GM12878 (cell line): ENCODE measurements at regions of chr7 and their contacts with region 1.

Region 1: GRCh38 chr7:43700059-43700501 is 29.2 kb downstream of the COA1 start:
- DNase-seq: no peak
- ATAC-seq: peak; percentile 66
- H3K4me3 ChIP-seq: no peak overlapping the region
- H3K27ac ChIP-seq: no peak overlapping the region
- H3K4me1 ChIP-seq: peaks cover 43% of the 10 kb centered on the region
- H3K27me3 ChIP-seq: no peaks in the 10 kb centered on the region
- CTCF ChIP-seq: peak; percentile 40 to 77 (median 50); a peak in 5 of 6 replicates
- EP300 ChIP-seq: no peak
- POLR2A ChIP-seq: no peak
- RAD21 ChIP-seq: peak; percentile 96

Region 2: DNA sequence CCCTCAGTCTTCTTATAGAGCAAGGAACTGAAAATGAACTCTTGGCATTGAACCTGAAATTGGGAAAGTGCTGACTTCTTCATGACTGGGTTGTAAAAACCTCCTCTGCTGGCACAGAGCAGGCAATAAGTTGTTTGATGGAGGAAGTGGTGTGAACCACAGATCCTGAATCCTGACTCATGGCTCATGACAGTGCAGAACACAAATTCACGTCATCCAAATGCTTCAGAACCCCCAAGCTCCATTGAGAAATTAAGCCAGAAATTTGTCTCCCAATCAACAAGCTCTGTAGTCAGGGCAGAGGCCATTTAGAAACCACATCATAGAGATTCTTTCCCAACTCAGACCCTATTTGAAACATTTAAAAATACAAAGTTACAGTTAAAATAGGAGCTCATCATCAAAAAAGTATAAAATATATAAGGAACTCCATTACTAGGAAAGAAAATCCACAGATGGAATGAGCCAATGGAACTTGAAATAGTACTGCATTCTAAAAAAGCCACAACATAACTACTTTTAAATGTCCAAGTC is 127.5 kb before region 1 on chr7:
- CTCF ChIA-PET with region 1: interaction called, 456 read pairs
- POLR2A ChIA-PET with region 1: no interaction called
- RAD21 ChIA-PET with region 1: interaction called, 11 read pairs
- SMC1A ChIA-PET with region 1: interaction called, 307 read pairs
- in situ Hi-C with region 1: no loop called
- intact Hi-C with region 1: no loop called
- DNase-seq: no peak
- ATAC-seq: peak; percentile 65
- H3K4me3 ChIP-seq: no peak overlapping the region
- H3K27ac ChIP-seq: peak overlapping the region; percentile 18; the same call in 1 of the 2 replicates
- H3K4me1 ChIP-seq: peaks cover 33% of the 10 kb centered on the region
- H3K27me3 ChIP-seq: no peaks in the 10 kb centered on the region
- CTCF ChIP-seq: no peak
- EP300 ChIP-seq: no peak; a peak in 1 of 4 replicates
- POLR2A ChIP-seq: no peak
- RAD21 ChIP-seq: no peak

Region 3: GRCh38 chr7:43612599-43613589 is 87.2 kb before region 1 on chr7:
- CTCF ChIA-PET with region 1: interaction called, 12 read pairs
- POLR2A ChIA-PET with region 1: no interaction called
- RAD21 ChIA-PET with region 1: interaction called, 10 read pairs
- SMC1A ChIA-PET with region 1: interaction called, 9 read pairs
- in situ Hi-C with region 1: no loop called
- intact Hi-C with region 1: no loop called
- DNase-seq: no peak
- ATAC-seq: peak; percentile 78
- H3K4me3 ChIP-seq: no peak overlapping the region
- H3K27ac ChIP-seq: peak overlapping the region; percentile 38; the same call in 1 of the 2 replicates
- H3K4me1 ChIP-seq: peaks cover 11% of the 10 kb centered on the region
- H3K27me3 ChIP-seq: no peaks in the 10 kb centered on the region
- CTCF ChIP-seq: no peak
- EP300 ChIP-seq: no peak
- POLR2A ChIP-seq: no peak
- RAD21 ChIP-seq: no peak

Region 4: GRCh38 chr7:43639858-43640491 is 60.1 kb before region 1 on chr7:
- CTCF ChIA-PET with region 1: interaction called, 132 read pairs
- POLR2A ChIA-PET with region 1: interaction called, 5 read pairs
- RAD21 ChIA-PET with region 1: interaction called, 132 read pairs
- SMC1A ChIA-PET with region 1: interaction called, 177 read pairs
- in situ Hi-C with region 1: no loop called
- intact Hi-C with region 1: no loop called
- DNase-seq: no peak
- ATAC-seq: no peak
- H3K4me3 ChIP-seq: no peak overlapping the region
- H3K27ac ChIP-seq: no peak overlapping the region
- H3K4me1 ChIP-seq: no peaks in the 10 kb centered on the region
- H3K27me3 ChIP-seq: no peaks in the 10 kb centered on the region
- CTCF ChIP-seq: no peak
- EP300 ChIP-seq: no peak
- POLR2A ChIP-seq: no peak
- RAD21 ChIP-seq: no peak

Region 5: GRCh38 chr7:43659549-43659896 is 40.6 kb before region 1 on chr7:
- CTCF ChIA-PET with region 1: interaction called, 3 read pairs
- POLR2A ChIA-PET with region 1: no interaction called
- RAD21 ChIA-PET with region 1: interaction called, 3 read pairs
- SMC1A ChIA-PET with region 1: interaction called, 17 read pairs
- in situ Hi-C with region 1: no loop called
- intact Hi-C with region 1: no loop called
- DNase-seq: no peak
- ATAC-seq: peak; percentile 10; the same call in 2 of the 3 replicates
- H3K4me3 ChIP-seq: no peak overlapping the region
- H3K27ac ChIP-seq: peak overlapping the region; percentile 28
- H3K4me1 ChIP-seq: peaks cover 17% of the 10 kb centered on the region
- H3K27me3 ChIP-seq: no peaks in the 10 kb centered on the region
- CTCF ChIP-seq: no peak
- EP300 ChIP-seq: no peak
- POLR2A ChIP-seq: no peak
- RAD21 ChIP-seq: no peak

Region 6: DNA sequence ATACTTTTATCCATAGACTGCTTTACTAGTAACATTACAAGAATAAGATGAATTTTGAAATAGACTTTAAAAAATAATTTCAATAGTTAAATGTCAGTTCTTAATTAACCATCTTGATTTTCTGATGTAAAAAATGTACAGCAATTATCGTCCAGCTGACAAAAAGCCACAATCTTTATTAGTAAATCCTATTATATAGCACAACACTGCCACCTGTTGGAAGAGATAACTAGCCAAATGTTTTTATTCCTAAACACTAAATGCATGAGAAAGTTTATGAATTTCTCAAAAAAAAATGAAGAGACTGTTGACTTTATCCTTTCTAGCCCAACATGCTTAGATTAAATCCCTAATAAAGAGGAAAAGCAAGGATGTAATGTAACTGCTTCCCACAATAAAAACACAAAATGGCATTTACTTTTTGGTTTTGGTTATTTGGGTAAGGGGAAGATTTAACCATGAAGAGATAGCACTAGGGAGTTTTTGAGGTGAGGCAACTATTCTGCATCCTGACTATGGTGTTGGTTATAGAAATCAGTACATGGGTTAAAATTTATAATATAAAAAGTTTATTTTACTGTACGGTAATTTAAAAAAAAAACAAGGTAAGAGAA is 21.2 kb after region 1 on chr7:
- CTCF ChIA-PET with region 1: interaction called, 100 read pairs
- POLR2A ChIA-PET with region 1: interaction called, 3 read pairs
- RAD21 ChIA-PET with region 1: interaction called, 32 read pairs
- SMC1A ChIA-PET with region 1: interaction called, 74 read pairs
- in situ Hi-C with region 1: no loop called
- intact Hi-C with region 1: no loop called
- DNase-seq: no peak
- ATAC-seq: peak; percentile 52
- H3K4me3 ChIP-seq: no peak overlapping the region
- H3K27ac ChIP-seq: no peak overlapping the region
- H3K4me1 ChIP-seq: no peaks in the 10 kb centered on the region
- H3K27me3 ChIP-seq: no peaks in the 10 kb centered on the region
- CTCF ChIP-seq: peak; percentile 40 to 64 (median 44); a peak in 5 of 6 replicates
- EP300 ChIP-seq: no peak
- POLR2A ChIP-seq: no peak
- RAD21 ChIP-seq: peak; percentile 68

Region 7: GRCh38 chr7:43799589-43799988 is 99.5 kb after region 1 on chr7:
- CTCF ChIA-PET with region 1: interaction called, 25 read pairs
- POLR2A ChIA-PET with region 1: no interaction called
- RAD21 ChIA-PET with region 1: interaction called, 16 read pairs
- SMC1A ChIA-PET with region 1: interaction called, 15 read pairs
- in situ Hi-C with region 1: no loop called
- intact Hi-C with region 1: no loop called
- DNase-seq: no peak
- ATAC-seq: peak; percentile 63
- H3K4me3 ChIP-seq: no peak overlapping the region
- H3K27ac ChIP-seq: no peak overlapping the region
- H3K4me1 ChIP-seq: no peaks in the 10 kb centered on the region
- H3K27me3 ChIP-seq: no peaks in the 10 kb centered on the region
- CTCF ChIP-seq: peak; percentile 16 to 30 (median 21); a peak in 1 of 6 replicates
- EP300 ChIP-seq: no peak
- POLR2A ChIP-seq: no peak
- RAD21 ChIP-seq: peak; percentile 29; the same call in 1 of the 2 replicates